Prostate gland (tissue), 2 donors: ENCODE measurements at regions of chr9 and their contacts with region 1.

Region 1: DNA sequence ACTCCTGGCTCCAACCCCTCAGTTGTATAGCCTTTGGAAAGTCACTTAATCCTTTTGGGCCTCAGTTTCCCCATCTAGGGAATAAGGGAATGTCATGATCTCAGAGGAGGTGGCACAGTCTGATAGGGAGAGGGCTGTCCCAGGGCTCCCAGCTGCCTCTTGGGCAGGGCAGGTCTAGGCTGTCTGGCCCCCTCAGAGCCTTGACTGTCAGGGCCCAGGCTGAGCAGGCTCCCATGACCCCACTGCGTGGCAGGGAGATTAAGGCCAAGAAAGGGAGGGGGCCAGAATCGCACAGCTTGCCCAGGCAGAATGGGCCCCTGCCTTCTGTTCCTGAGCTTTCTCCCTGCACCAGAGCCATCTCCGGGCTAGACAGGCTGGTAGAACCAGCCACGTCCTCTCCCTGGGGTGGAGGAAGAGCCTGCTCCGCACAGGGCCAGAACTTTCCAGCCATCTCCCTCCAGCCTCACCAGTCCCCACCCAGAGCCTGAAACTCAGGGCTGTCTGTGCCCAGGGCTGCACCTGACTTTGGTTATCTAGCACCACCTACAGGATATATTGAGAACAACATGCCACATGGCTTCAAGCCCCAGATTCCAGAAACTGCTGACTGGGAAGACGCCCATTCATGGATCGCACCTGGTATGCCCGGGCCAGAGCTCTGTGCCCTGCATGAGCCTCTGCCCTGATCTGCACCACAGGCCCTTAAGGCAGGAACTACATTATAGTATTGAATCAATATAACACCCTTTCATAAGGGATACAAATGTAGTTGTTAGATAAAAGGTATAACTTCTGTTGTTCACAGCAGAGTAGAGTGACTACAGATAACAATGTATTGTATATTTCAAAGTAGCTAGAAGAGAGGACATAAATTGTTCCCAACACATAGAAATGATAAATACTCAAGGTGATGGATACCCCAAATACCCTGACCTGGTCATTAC is 32.0 kb downstream of the NAIF1 start:
- DNase-seq: peak; percentile 84
- H3K4me3 ChIP-seq: no peak overlapping the region
- H3K27ac ChIP-seq: no peak overlapping the region
- H3K4me1 ChIP-seq: no peaks in the 10 kb centered on the region
- H3K27me3 ChIP-seq: no peaks in the 10 kb centered on the region
- CTCF ChIP-seq: peak; percentile 82 to 98 (median 95)
- POLR2A ChIP-seq: peak; percentile 16

Region 2: DNA sequence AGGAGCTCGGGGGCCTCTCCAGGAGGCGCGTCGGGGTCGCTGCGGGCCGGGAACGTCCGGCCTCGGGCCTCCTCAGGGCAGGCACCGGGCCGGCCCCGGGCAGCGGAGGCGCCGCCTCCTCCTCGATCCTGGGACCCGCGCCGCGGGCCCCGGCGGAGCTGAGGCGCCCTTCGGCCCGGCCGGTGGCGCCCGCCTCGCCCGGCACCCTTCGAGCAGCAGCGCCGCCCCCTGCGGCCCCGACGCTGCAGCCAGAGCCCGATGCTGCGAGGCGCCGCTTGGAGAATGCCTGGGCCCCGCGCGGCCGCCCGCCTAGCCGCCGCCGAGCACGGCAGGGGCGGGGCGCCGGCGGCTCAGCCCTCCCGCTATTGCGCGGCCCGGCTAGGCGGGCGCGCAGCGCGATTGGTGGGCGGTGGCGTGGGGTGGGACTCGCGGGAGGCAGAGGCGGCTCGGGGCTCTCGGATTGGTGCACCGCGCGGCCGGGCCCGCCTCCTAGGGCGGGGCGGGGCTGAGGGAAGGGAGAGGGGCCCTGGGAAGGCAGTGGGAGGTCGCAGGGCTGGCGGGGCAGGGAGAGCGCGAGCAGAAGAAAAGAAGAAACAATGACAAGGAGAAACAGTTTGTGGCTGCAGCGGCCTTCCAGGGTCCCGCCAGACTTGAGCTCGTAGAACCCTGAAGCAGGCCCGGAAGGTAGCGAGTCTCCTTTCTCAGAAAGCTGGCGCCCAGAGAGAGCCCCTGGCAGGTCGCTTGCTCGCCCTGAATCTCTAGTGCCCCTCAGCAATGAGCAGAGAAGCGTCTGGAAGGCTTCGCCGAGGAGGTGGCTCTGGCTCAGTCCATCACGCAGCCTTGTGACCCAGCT is 54.2 kb before region 1 on chr9 and contains the start of gene EEIG1:
- intact Hi-C with region 1: loop called (anchors 5 kb)
- DNase-seq: peak; percentile 95
- H3K4me3 ChIP-seq: peak within 1 kb of the TSS; percentile 85 to 92
- H3K27ac ChIP-seq: peak within 1 kb of the TSS; percentile 90 to 92
- H3K4me1 ChIP-seq: peaks cover 12% of the 10 kb centered on the region
- H3K27me3 ChIP-seq: no peaks in the 10 kb centered on the region
- CTCF ChIP-seq: no peak
- POLR2A ChIP-seq: peak; percentile 80
- total RNA-seq, gene EEIG1: 23.4 to 84.6 TPM

Region 3: GRCh38 chr9:128117613-128118471 is 82.7 kb after region 1 on chr9:
- intact Hi-C with region 1: loop called (anchors 2 kb)
- DNase-seq: peak; percentile 90
- H3K4me3 ChIP-seq: no peak overlapping the region
- H3K27ac ChIP-seq: no peak overlapping the region
- H3K4me1 ChIP-seq: no peaks in the 10 kb centered on the region
- H3K27me3 ChIP-seq: no peaks in the 10 kb centered on the region
- CTCF ChIP-seq: peak; percentile 100
- POLR2A ChIP-seq: no peak

Region 4: GRCh38 chr9:128259156-128259555 is 224.1 kb after region 1 on chr9:
- intact Hi-C with region 1: no loop called
- DNase-seq: no peak
- H3K4me3 ChIP-seq: no peak overlapping the region
- H3K27ac ChIP-seq: no peak overlapping the region
- H3K4me1 ChIP-seq: no peaks in the 10 kb centered on the region
- H3K27me3 ChIP-seq: no peaks in the 10 kb centered on the region
- CTCF ChIP-seq: no peak
- POLR2A ChIP-seq: no peak